ENCODE measurements at regions of chr1 and their contacts with region 1.

Region 1: GRCh38 chr1:161021165-161021960 is 411 bp upstream of the F11R start:
- DNase-seq: peak; percentile 100
- H3K4me3 ChIP-seq: peak overlapping the region; percentile 74 to 81 (median 80)
- H3K27ac ChIP-seq: peak overlapping the region; percentile 98
- H3K4me1 ChIP-seq: peaks cover 34% of the 10 kb centered on the region
- H3K27me3 ChIP-seq: no peaks in the 10 kb centered on the region
- CTCF ChIP-seq: no peak

Region 2: DNA sequence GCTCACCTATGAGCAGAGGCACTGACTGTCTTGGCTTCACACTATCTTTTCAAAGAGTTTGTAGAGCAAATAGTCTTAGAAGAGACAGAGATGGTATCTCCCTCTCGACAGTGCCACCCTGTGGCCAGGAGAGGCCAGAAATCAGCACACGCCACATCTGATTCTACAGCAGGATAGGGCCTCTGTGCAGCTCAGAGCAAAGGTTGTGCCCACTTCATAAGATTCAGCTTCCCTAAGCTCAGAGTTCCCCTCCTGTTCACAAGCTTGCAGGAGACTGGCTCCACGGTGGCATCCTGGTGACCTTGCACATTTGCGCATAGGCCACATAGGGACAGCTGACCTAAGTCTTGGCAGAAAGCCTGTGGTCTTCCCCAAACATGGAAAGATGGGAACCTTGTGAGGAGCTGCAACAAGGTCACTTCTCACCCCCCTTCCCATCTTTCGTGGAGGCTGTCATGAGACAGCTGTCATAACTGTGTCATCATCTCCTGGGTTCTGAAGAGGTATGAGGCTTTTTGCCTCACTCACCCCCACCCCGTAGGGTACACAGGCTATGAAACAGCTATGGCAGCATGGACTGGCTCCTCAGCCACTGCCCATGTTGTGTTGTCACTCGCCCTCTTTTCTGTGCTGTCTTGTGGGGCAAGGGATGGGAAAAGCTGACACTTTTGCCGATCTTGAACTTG is 69.8 kb before region 1 on chr1:
- CTCF ChIA-PET with region 1: no interaction called
- dilution Hi-C with region 1: no loop called
- in situ Hi-C with region 1: no loop called
- intact Hi-C with region 1: no loop called
- DNase-seq: peak; percentile 69
- H3K4me3 ChIP-seq: no peak overlapping the region
- H3K27ac ChIP-seq: peak overlapping the region; percentile 70
- H3K4me1 ChIP-seq: peaks cover 38% of the 10 kb centered on the region
- H3K27me3 ChIP-seq: no peaks in the 10 kb centered on the region
- CTCF ChIP-seq: peak; percentile 84 to 86

Region 3: DNA sequence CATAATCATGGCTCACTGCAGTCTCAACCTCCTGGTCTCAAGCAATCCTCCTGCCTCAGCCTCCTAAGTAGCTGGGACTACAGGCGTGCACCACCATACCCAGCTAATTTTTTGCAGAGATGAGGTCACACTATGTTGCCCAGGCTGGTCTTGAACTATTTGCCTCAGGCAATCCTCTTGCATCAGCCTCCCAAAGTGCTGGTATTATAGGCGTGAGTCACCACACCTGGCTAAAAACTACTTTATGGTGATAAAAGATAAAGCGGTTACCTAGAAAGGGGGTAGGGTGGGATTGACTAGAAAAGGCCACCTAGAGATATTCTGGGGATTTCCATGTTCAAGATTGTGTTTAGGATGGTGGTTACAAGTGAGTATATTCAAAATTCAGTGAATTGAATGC is 12.4 kb after region 1 on chr1:
- CTCF ChIA-PET with region 1: no interaction called
- dilution Hi-C with region 1: no loop called
- in situ Hi-C with region 1: no loop called
- intact Hi-C with region 1: loop called (anchors 1 kb)
- DNase-seq: peak; percentile 79
- H3K4me3 ChIP-seq: no peak overlapping the region
- H3K27ac ChIP-seq: no peak overlapping the region
- H3K4me1 ChIP-seq: peaks cover 10% of the 10 kb centered on the region
- H3K27me3 ChIP-seq: no peaks in the 10 kb centered on the region
- CTCF ChIP-seq: no peak

Measured in mammary epithelial cell (primary cell).